GM12878 (cell line): ENCODE measurements at regions of chr3 and their contacts with region 1.

Region 1: GRCh38 chr3:45656575-45657363 is 32.4 kb upstream of the SACM1L start:
- DNase-seq: peak; percentile 76
- ATAC-seq: peak; percentile 88
- H3K4me3 ChIP-seq: no peak overlapping the region
- H3K27ac ChIP-seq: peak overlapping the region; percentile 57
- H3K4me1 ChIP-seq: peaks cover 33% of the 10 kb centered on the region
- H3K27me3 ChIP-seq: no peaks in the 10 kb centered on the region
- CTCF ChIP-seq: peak; percentile 83 to 93 (median 92)
- EP300 ChIP-seq: no peak
- POLR2A ChIP-seq: no peak
- RAD21 ChIP-seq: peak; percentile 93

Region 2: GRCh38 chr3:45210308-45211041 is 446.3 kb before region 1 on chr3:
- CTCF ChIA-PET with region 1: interaction called, 5 read pairs
- POLR2A ChIA-PET with region 1: no interaction called
- RAD21 ChIA-PET with region 1: interaction called, 3 read pairs
- SMC1A ChIA-PET with region 1: no interaction called
- in situ Hi-C with region 1: no loop called
- intact Hi-C with region 1: loop called (anchors 10 kb)
- DNase-seq: no peak
- ATAC-seq: peak; percentile 98
- H3K4me3 ChIP-seq: no peak overlapping the region
- H3K27ac ChIP-seq: no peak overlapping the region
- H3K4me1 ChIP-seq: no peaks in the 10 kb centered on the region
- H3K27me3 ChIP-seq: peaks cover 2 to 3% of the 10 kb centered on the region in 2 experiments; a peak in 3 of 4 replicates
- CTCF ChIP-seq: peak; percentile 60 to 75 (median 70); a peak in 5 of 6 replicates
- EP300 ChIP-seq: no peak
- POLR2A ChIP-seq: no peak
- RAD21 ChIP-seq: peak; percentile 44

Region 3: DNA sequence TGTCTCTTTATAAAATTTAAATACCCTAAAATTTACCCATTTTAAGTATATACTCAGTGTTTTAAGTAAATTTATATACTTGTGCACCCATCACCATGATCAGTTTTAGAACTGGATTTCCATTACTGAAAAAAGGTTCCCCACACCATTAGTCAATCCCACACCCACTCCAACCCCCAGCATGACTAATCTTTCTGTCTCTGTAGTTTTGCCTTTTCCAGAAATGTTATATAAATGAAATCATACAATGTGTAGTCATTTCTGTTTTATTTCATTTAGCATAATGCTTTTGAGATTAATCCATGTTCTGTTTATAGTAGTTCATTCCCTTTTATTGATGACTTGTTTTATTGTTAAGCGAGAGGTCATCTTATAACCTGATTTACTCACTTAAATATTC is 128.3 kb before region 1 on chr3:
- CTCF ChIA-PET with region 1: interaction called, 22 read pairs
- POLR2A ChIA-PET with region 1: no interaction called
- RAD21 ChIA-PET with region 1: interaction called, 4 read pairs
- SMC1A ChIA-PET with region 1: interaction called, 4 read pairs
- in situ Hi-C with region 1: no loop called
- intact Hi-C with region 1: no loop called
- DNase-seq: no peak
- ATAC-seq: no peak
- H3K4me3 ChIP-seq: no peak overlapping the region
- H3K27ac ChIP-seq: no peak overlapping the region
- H3K4me1 ChIP-seq: no peaks in the 10 kb centered on the region
- H3K27me3 ChIP-seq: no peaks in the 10 kb centered on the region
- CTCF ChIP-seq: no peak
- EP300 ChIP-seq: no peak
- POLR2A ChIP-seq: no peak
- RAD21 ChIP-seq: no peak

Region 4: DNA sequence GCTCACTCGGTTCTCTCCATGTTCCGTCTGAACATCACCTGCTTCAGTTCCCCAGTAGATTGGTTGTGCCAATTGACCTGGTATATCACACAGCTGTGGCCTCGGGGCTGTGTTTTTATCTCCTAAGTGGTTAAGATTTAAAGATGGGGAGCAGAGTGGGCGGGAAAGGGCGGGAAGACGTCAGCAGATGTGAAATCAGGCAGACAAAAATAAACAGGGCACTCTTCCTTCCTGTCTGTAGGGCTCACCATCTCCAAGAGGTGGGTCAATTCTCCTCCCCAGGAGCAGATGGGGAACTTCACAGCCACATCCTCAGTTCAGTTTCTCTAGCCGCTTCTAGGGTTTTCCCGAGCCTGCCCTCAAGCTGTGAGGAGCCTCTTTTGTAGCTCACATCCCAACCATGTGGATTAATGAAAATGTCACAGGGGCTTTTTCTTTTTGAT is 89.0 kb before region 1 on chr3:
- CTCF ChIA-PET with region 1: interaction called, 16 read pairs
- POLR2A ChIA-PET with region 1: interaction called, 3 read pairs
- RAD21 ChIA-PET with region 1: interaction called, 12 read pairs
- SMC1A ChIA-PET with region 1: interaction called, 12 read pairs
- in situ Hi-C with region 1: no loop called
- intact Hi-C with region 1: no loop called
- DNase-seq: peak; percentile 84
- ATAC-seq: peak; percentile 83
- H3K4me3 ChIP-seq: no peak overlapping the region
- H3K27ac ChIP-seq: peak overlapping the region; percentile 66
- H3K4me1 ChIP-seq: peaks cover 54% of the 10 kb centered on the region
- H3K27me3 ChIP-seq: no peaks in the 10 kb centered on the region
- CTCF ChIP-seq: no peak
- EP300 ChIP-seq: peak; percentile 32 to 76; a peak in 2 of 4 replicates
- POLR2A ChIP-seq: no peak; the same call in 1 of the 2 replicates
- RAD21 ChIP-seq: no peak

Region 5: DNA sequence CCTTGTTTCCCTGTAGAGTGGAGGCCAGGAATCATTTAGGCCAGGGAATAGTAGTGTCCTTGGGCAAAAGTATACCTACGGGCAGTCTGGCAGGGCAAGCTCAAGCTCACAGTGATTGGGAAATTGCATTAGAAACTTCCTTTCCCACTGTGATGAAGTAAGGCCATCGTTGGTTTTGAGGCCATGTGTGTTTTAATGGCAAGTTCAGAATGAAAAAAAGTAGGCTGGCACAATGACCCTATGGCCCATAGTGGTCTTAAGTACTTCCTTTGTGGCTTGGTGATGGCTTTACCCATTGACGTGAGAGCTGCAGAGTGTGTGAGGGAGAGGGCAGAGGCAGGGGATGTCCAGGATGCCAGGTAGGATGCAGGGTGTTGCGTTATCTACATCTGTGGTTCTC is 33.4 kb before region 1 on chr3:
- CTCF ChIA-PET with region 1: interaction called, 14 read pairs
- POLR2A ChIA-PET with region 1: interaction called, 4 read pairs
- RAD21 ChIA-PET with region 1: interaction called, 3 read pairs
- SMC1A ChIA-PET with region 1: no interaction called
- in situ Hi-C with region 1: no loop called
- intact Hi-C with region 1: no loop called
- DNase-seq: no peak
- ATAC-seq: no peak
- H3K4me3 ChIP-seq: no peak overlapping the region
- H3K27ac ChIP-seq: no peak overlapping the region
- H3K4me1 ChIP-seq: no peaks in the 10 kb centered on the region; the same call in 1 of the 2 replicates
- H3K27me3 ChIP-seq: no peaks in the 10 kb centered on the region
- CTCF ChIP-seq: no peak
- EP300 ChIP-seq: no peak
- POLR2A ChIP-seq: no peak; the same call in 1 of the 2 replicates
- RAD21 ChIP-seq: no peak

Region 6: GRCh38 chr3:45730409-45731154 is 73.8 kb after region 1 on chr3:
- CTCF ChIA-PET with region 1: interaction called, 14 read pairs
- POLR2A ChIA-PET with region 1: no interaction called
- RAD21 ChIA-PET with region 1: no interaction called
- SMC1A ChIA-PET with region 1: interaction called, 6 read pairs
- in situ Hi-C with region 1: no loop called
- intact Hi-C with region 1: no loop called
- DNase-seq: peak; percentile 19
- ATAC-seq: peak; percentile 95
- H3K4me3 ChIP-seq: no peak overlapping the region
- H3K27ac ChIP-seq: peak overlapping the region; percentile 1; the same call in 1 of the 2 replicates
- H3K4me1 ChIP-seq: peaks cover 8% of the 10 kb centered on the region
- H3K27me3 ChIP-seq: no peaks in the 10 kb centered on the region
- CTCF ChIP-seq: no peak
- EP300 ChIP-seq: no peak
- POLR2A ChIP-seq: no peak
- RAD21 ChIP-seq: no peak

Region 7: GRCh38 chr3:46266598-46266997 is 609.8 kb after region 1 on chr3:
- CTCF ChIA-PET with region 1: no interaction called
- POLR2A ChIA-PET with region 1: no interaction called
- RAD21 ChIA-PET with region 1: no interaction called
- SMC1A ChIA-PET with region 1: no interaction called
- in situ Hi-C with region 1: no loop called
- intact Hi-C with region 1: no loop called
- DNase-seq: no peak
- ATAC-seq: no peak
- H3K4me3 ChIP-seq: no peak overlapping the region
- H3K27ac ChIP-seq: no peak overlapping the region
- H3K4me1 ChIP-seq: peaks cover 7% of the 10 kb centered on the region
- H3K27me3 ChIP-seq: 0 out of 4 replicates have a peak, but pooled peaks cover 0 to 6% of the 10 kb centered on the region in 2 experiments
- CTCF ChIP-seq: no peak
- EP300 ChIP-seq: no peak
- POLR2A ChIP-seq: no peak
- RAD21 ChIP-seq: no peak